ENCODE measurements at regions of chr7 and their contacts with region 1.

Region 1: GRCh38 chr7:106413446-106413845 is 128.7 kb upstream of the NAMPT start:
- DNase-seq: no peak
- ATAC-seq: no peak

Region 2: DNA sequence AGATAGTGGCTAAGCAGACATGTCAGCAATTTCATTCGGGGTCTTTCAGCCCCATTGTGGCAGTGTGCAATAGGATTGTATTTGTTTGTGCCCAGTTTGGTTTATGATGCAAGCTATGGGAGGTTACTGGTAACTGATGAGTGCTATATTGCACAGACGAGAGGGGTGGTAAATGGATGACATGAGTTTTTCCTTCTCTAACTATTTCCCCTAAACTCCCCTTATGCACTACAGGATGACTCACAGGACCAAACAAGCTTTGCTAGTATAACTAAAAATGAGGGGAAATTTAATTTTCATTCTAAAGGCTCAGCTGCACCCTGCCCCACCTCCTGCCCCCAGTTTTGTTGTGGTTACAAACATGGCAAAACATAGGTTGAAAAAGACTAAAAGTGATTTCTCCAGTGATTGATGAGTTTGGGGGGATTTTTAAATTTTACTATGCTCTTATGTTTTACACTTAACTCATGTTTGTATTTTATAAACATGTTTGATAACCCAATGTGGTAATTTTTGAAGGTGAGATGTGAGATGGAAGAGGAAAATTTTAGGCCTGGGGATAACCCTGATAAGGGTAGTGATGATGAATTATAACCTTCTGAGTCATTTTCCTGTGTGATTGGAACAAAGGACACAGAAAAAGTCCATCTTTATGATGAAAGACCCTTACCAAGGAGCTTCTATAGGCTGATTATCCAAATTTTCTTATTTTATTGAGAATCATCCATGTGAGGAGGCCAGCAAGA is 67.9 kb before region 1 on chr7:
- intact Hi-C with region 1: loop called (anchors 2 kb)
- DNase-seq: no peak
- ATAC-seq: no peak